Ascending aorta (tissue), 2 donors: ENCODE measurements at regions of chr2 and their contacts with region 1.

Region 1: DNA sequence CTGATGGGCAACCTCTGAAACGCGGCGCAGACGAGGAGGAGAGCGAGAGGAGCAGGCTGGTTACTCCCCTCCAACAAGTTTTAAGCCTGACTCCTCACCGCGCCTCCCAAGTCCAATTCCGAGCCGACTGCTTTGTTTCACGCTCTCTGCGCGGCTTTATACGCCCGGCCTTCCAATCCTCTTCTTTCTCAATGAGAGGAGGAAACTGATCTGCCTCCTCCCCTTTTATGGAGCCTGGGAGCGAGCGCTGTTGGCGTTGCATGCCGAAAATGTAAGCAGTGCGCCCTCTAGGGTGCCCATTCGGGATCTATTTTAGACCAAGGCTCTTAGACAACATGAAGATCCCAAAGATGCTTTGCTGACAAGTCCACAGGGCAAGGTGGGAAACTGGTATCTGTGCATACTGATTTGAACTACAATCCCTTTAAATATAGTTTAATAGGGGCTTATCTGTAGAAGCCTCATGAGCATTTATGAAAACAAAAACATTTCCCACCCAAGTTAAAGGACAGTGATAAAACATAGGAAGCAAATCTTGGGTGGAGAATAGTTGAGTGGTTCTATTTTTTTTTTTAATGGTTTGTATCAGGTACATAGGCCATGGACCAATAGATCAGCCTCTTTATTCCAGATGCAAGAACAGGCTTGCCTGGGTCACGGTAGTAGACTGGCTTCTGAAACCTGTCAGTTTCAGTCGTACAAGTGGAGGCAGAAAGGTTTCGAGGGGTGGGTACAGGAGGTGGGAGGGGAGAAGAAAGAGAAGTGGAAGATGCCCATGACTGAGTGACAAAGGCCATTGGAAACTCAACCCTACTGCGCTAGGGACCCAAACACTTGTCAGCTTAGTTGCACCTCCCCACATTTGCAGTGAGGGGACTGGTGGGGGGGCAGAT is at the start of gene RND3:
- DNase-seq: peak; percentile 86 to 99
- H3K4me3 ChIP-seq: peak within 1 kb of the TSS; percentile 81 to 88
- H3K27ac ChIP-seq: peak within 1 kb of the TSS; percentile 99 to 100
- H3K4me1 ChIP-seq: peaks cover 0 to 15% of the 10 kb centered on the region in 2 donors
- H3K27me3 ChIP-seq: no peaks in the 10 kb centered on the region
- CTCF ChIP-seq: peak; percentile 79 to 86 (median 80)
- total RNA-seq, gene RND3: 10.7 TPM

Region 2: DNA sequence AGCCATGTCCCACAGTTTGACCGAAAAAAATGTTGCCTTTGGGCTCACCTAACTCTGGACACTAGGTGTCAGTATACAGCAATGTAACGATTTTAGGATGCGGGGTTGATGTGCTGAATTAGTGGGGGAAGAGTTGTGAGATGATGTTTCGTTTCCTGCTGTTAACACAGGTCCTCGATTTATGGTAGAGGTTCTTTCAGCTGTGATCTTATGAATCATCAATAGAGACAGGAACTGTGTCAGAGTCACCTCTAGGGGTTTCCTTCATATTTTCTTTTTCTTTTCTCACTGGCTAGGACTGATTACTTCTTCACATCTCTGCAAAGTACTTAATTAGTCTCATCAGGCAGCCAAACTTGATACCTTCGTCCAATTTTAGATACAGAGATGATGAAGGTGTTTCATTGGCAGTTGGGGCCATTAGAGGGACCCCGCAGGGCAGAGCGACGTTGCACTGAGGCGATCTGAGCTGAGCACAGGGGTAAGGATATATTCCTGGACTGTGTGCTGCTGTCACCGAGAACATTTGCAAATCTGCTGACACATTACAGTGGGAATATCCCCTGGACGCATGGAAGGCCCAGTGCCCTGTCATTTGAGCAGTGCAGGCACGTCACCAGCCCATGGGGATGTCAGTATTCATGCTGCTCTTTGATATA is 890.0 kb before region 1 on chr2:
- intact Hi-C with region 1: loop called (anchors 1 kb)
- DNase-seq: peak in 1 of 2 donors; percentile 71
- H3K4me3 ChIP-seq: peak overlapping the region; percentile 23 to 55
- H3K27ac ChIP-seq: no peak overlapping the region
- H3K4me1 ChIP-seq: no peaks in the 10 kb centered on the region
- H3K27me3 ChIP-seq: no peaks in the 10 kb centered on the region
- CTCF ChIP-seq: peak; percentile 71 to 74 (median 74)

Region 3: GRCh38 chr2:150167711-150168110 is 320.1 kb before region 1 on chr2:
- intact Hi-C with region 1: loop called (anchors 5 kb)
- DNase-seq: no peak
- H3K4me3 ChIP-seq: no peak overlapping the region
- H3K27ac ChIP-seq: no peak overlapping the region
- H3K4me1 ChIP-seq: peaks cover 0 to 15% of the 10 kb centered on the region in 2 donors
- H3K27me3 ChIP-seq: no peaks in the 10 kb centered on the region
- CTCF ChIP-seq: no peak

Region 4: GRCh38 chr2:150247481-150247880 is 240.3 kb before region 1 on chr2:
- intact Hi-C with region 1: no loop called
- DNase-seq: no peak
- H3K4me3 ChIP-seq: no peak overlapping the region
- H3K27ac ChIP-seq: no peak overlapping the region
- H3K4me1 ChIP-seq: no peaks in the 10 kb centered on the region
- H3K27me3 ChIP-seq: no peaks in the 10 kb centered on the region
- CTCF ChIP-seq: no peak

Region 5: DNA sequence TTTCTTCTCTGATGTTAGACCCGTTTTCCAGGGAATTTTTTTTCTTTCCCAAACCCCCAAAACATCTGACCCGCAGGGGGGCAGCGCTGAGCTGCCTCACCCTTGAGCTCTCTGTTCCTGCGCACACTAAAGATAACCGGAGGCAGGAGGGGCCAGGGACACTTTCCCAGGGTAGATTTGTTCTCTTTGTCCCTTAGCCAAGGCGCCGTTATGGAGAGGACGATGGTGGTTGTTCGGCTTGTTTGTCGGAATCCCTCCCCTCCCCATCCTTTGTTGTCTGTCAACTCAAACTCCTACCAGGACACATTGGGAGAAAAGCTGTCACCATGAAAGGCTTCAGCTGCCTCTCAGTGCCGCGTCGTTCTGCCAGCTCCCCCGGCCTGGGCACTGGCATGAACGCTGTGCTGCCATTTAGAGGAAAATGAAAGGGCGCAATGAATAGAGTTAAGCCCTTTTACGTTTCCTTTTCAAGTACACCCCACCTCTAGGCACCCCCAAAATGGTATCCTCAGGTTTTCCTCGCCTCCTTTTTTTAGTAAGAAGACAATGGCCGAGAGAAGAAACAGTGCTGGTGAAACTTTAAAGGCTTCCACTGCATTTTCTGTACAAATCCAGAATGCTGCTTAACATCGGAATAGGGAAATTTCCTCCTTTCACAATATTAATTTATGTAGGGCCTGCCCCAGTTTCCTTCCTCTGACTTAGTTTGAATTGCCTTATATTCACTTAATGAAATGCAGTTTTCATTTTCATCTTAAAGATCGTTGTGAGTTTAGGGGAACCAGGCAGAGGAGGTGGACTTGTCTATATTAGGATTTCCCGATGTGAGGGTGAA is 62.4 kb before region 1 on chr2:
- intact Hi-C with region 1: loop called (anchors 1 kb)
- DNase-seq: no peak
- H3K4me3 ChIP-seq: peak overlapping the region in 1 of 2 donors; percentile 28
- H3K27ac ChIP-seq: no peak overlapping the region
- H3K4me1 ChIP-seq: no peaks in the 10 kb centered on the region
- H3K27me3 ChIP-seq: no peaks in the 10 kb centered on the region
- CTCF ChIP-seq: peak in 2 of 3 experiments; percentile 21 to 35

Region 6: GRCh38 chr2:150449871-150450270 is 37.9 kb before region 1 on chr2:
- intact Hi-C with region 1: no loop called
- DNase-seq: no peak
- H3K4me3 ChIP-seq: no peak overlapping the region
- H3K27ac ChIP-seq: no peak overlapping the region
- H3K4me1 ChIP-seq: no peaks in the 10 kb centered on the region
- H3K27me3 ChIP-seq: no peaks in the 10 kb centered on the region
- CTCF ChIP-seq: no peak

Region 7: DNA sequence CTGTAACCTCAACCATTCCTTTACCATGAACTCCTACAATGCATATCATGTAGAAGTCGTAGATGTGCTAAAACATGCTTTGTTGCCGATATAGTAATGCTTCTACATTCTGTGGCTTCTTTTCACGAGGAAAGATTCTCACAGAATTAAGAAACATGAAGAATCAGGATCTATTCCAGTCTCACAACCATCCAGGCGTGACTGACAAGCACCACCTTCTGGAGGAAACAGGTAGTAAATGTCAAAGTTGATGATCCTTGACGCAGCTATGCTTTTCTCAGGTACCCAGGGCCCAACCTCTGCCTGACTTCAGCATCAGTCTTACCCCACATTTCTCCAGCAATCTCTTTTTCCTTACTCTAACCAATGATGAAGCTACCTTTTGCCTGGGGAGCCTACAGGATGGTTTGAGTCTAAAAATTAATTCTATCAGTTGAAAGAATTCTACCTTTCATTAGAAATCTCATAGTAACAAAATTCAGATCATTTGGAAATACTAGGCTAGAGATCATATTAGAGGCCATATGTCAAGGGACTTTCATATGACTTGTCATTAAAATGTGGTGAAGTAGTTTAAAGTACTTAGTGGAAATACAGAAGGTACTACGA is 123.0 kb after region 1 on chr2:
- intact Hi-C with region 1: no loop called
- DNase-seq: no peak
- H3K4me3 ChIP-seq: no peak overlapping the region
- H3K27ac ChIP-seq: no peak overlapping the region
- H3K4me1 ChIP-seq: no peaks in the 10 kb centered on the region
- H3K27me3 ChIP-seq: no peaks in the 10 kb centered on the region
- CTCF ChIP-seq: peak in 2 of 3 experiments; percentile 27 to 34

Region 8: GRCh38 chr2:150732064-150732463 is 244.3 kb after region 1 on chr2:
- intact Hi-C with region 1: no loop called
- DNase-seq: no peak
- H3K4me3 ChIP-seq: no peak overlapping the region
- H3K27ac ChIP-seq: no peak overlapping the region
- H3K4me1 ChIP-seq: no peaks in the 10 kb centered on the region
- H3K27me3 ChIP-seq: no peaks in the 10 kb centered on the region
- CTCF ChIP-seq: no peak